CD4-positive, alpha-beta memory T cell (primary cell): ENCODE measurements at regions of chr7 and their contacts with region 1.

Region 1: DNA sequence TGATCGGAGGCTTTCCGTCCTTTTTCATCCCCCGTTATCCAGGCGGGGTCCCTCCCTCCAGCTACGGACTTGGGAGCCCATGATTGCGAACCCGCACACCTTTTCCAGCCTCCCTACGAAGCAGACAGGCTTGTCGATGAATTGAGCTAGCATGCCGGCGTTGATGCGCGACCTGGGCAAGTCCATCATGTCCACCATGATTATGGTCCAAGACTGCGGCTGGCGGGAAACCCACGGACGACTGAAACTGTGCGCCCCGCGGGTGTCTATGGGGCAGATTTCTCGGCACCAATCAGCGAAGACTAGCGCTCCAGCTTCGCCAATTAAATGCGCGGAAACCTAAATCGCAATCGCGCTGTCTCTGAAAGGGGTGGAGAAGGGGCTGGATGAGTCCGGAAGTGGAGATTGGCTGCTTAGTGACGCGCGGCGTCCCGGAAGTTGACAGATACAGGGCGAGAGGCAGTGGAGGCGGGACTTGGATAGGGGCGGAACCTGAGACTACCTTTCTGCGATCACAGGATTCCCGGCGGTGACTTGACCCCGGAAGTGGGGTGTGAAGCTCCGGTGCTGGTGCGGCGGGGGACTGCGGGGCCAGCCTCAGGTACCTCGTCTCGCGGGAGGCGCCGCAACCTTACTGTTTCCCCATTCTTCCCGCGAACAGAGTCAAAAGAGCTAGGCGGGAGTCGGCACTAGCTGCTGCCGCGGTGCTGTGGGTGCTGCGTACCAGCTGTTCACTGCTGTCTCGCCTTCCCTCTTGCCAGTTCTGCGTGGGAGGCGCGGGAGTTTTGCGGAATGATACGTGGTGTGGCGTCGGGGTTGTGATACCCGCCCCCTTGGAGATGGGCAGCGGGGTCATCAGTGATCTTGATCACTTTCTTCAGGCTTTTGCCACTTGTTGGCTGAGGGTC is at the start of gene UMAD1:
- DNase-seq: peak; percentile 97 to 100 (median 100)
- H3K4me3 ChIP-seq: peak within 1 kb of the TSS; percentile 79 to 97
- H3K4me3 Mint-ChIP-seq: peak within 1 kb of the TSS; percentile 91 to 98 (median 96)
- H3K27ac ChIP-seq: peak within 1 kb of the TSS; percentile 91
- H3K27ac Mint-ChIP-seq: peak within 1 kb of the TSS; percentile 95 to 99 (median 99)
- H3K4me1 ChIP-seq: peaks cover 28% of the 10 kb centered on the region
- H3K4me1 Mint-ChIP-seq: peaks cover 25 to 62% (median 42%) of the 10 kb centered on the region in 4 donors
- H3K27me3 ChIP-seq: no peaks in the 10 kb centered on the region
- H3K27me3 Mint-ChIP-seq: no peaks in the 10 kb centered on the region
- total RNA-seq, gene UMAD1: 23.5 to 25.1 TPM

Region 2: DNA sequence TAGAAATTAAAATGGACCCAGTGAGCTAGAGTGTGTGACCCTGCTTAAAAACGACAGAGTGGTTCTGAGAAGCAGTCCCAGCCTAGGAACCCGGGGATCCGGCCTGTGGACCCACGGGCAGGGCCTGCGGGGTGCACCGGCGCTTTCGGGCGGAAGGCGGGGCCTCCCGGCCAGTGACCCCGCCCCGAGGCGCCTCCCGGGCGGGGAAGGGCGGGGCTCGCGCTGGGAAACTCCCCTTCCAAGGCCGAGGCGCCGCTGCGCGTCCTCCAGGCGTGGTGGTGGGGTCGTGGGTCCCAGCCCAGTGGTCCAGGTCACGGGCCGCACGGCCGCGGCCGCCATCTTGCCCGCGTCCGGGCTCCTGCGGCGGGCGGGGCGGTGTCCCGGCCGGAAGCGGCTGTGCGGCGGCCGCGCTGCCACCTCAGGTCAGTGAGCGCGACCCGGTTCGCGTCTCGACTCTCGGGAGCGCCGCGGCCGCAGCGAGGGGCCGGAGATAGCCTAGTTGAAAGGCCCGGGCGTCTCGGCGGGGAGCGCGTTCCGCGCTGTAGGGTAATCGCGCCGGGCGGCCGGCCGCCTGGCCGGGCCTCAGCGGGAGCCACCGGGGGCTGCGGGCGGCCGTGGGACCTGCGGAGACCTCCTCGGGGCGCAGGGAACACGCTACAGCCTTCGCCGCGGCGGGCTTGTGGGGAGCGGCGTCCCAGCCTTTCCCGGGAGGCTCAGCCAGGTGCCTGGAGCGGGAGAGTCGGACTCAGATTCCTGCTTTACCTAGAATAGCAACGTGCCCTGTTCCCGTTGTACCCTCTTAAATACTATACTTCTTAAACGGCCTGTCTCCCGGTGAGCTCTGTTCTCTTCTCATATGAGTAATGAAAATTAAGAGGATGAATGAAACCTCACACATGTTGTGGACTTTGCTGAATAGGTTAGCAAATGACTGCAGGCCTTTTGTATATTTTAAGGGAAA is 73.5 kb before region 1 on chr7 and contains the start of gene MIOS:
- CTCF ChIA-PET with region 1: no interaction called
- POLR2A ChIA-PET with region 1: interaction called, 18 read pairs
- intact Hi-C with region 1: loop called (anchors 1 kb)
- DNase-seq: peak; percentile 79 to 85 (median 84)
- H3K4me3 ChIP-seq: peak within 1 kb of the TSS; percentile 33 to 61
- H3K4me3 Mint-ChIP-seq: peak within 1 kb of the TSS in 7 of 8 donors; percentile 76 to 90 (median 82)
- H3K27ac ChIP-seq: peak within 1 kb of the TSS; percentile 84
- H3K27ac Mint-ChIP-seq: peak within 1 kb of the TSS; percentile 72 to 95 (median 88)
- H3K4me1 ChIP-seq: peaks cover 47% of the 10 kb centered on the region
- H3K4me1 Mint-ChIP-seq: peaks cover 31 to 38% (median 34%) of the 10 kb centered on the region in 4 donors
- H3K27me3 ChIP-seq: no peaks in the 10 kb centered on the region
- H3K27me3 Mint-ChIP-seq: no peaks in the 10 kb centered on the region
- total RNA-seq, gene MIOS: 22.9 to 25.1 TPM

Region 3: DNA sequence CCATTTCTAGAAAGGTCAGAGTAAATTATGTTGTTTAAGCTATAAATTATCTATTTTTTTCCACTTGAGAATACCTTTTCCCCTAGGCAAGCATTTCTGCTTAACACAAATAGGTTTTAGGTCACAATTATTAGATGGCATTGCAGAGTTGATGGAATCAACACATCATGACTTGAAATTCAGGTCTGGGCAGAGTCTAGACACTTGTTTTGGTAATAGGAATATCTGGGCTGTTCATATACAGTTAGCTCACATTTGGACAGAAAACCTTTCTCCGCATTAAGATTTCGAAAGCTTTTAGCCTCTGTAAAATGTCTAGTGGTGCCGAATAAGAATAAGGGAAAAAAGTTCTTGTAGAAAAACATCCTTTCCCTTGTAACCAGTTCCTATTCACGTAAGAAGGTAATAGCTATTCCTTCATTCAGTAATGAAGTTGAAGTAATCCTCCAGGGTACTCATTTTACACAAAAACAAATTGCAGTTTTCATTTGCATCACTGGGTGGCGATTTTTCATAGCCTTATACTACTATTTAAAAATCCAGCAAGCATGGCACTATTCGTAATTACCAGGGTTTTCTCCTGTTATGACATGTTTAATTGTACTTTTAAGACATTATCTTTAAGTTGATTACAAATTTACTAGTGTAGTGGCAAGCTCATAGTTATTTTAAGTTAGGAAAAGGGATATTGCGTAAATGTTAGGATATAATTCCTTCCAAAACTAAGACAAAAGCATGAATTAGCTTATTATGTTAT is 40.9 kb after region 1 on chr7:
- CTCF ChIA-PET with region 1: interaction called, 14 read pairs
- POLR2A ChIA-PET with region 1: interaction called, 5 read pairs
- intact Hi-C with region 1: loop called (anchors 5 kb)
- DNase-seq: peak; percentile 47 to 62 (median 54)
- H3K4me3 ChIP-seq: no peak overlapping the region
- H3K4me3 Mint-ChIP-seq: peak overlapping the region in 3 of 8 donors; percentile 21 to 51 (median 35)
- H3K27ac ChIP-seq: no peak overlapping the region
- H3K27ac Mint-ChIP-seq: peak overlapping the region in 5 of 7 donors; percentile 41 to 59 (median 45)
- H3K4me1 ChIP-seq: peaks cover 15% of the 10 kb centered on the region
- H3K4me1 Mint-ChIP-seq: peaks cover 18 to 35% (median 24%) of the 10 kb centered on the region in 4 donors
- H3K27me3 ChIP-seq: no peaks in the 10 kb centered on the region
- H3K27me3 Mint-ChIP-seq: no peaks in the 10 kb centered on the region

Region 4: DNA sequence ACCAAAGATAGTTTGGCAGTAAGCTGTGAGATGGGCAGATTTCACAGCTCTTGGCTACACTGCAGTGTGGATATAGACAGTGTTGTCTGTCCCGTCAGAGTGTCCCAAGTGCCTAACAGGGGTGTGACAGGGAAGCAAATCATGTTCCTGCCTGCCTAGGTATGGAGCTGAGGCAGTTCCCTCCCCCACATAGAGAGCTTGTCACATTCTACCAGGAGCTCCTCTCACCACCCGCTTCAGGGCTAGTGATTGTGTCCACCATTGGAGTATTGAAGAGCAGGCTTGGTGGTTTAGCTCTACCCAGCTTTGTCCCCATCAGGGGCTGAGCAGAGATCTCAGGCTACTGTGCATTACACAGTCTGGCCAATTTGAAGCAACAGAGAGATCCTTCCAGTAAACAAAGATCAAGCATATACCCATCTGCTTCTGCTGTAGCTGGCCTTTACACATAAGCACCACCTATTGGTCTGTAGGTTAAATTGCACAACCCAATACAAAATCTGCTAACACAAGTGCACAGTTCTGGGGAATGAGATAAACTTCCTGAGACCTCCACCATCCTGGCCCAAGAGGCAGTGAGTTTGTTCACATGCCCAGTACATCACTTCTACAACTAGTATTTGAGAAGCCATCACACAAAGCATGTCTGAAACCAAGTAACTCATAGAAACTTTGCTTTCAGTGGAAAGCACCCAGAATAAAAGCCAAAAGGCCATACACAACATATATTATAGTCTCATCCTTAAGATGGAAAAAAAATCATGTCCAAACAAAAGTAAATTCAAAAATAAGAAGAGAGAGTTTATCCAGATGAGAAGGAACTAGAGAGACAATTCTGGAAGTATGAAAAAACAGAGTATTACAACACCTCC is 395.4 kb after region 1 on chr7:
- CTCF ChIA-PET with region 1: no interaction called
- POLR2A ChIA-PET with region 1: interaction called, 11 read pairs
- intact Hi-C with region 1: no loop called
- DNase-seq: peak in 4 of 5 donors; percentile 32 to 51 (median 41)
- H3K4me3 ChIP-seq: no peak overlapping the region
- H3K4me3 Mint-ChIP-seq: no peak overlapping the region
- H3K27ac ChIP-seq: no peak overlapping the region
- H3K27ac Mint-ChIP-seq: peak overlapping the region; percentile 16 to 86 (median 58)
- H3K4me1 ChIP-seq: peaks cover 20% of the 10 kb centered on the region
- H3K4me1 Mint-ChIP-seq: peaks cover 27 to 41% (median 30%) of the 10 kb centered on the region in 4 donors
- H3K27me3 ChIP-seq: no peaks in the 10 kb centered on the region
- H3K27me3 Mint-ChIP-seq: no peaks in the 10 kb centered on the region

Region 5: DNA sequence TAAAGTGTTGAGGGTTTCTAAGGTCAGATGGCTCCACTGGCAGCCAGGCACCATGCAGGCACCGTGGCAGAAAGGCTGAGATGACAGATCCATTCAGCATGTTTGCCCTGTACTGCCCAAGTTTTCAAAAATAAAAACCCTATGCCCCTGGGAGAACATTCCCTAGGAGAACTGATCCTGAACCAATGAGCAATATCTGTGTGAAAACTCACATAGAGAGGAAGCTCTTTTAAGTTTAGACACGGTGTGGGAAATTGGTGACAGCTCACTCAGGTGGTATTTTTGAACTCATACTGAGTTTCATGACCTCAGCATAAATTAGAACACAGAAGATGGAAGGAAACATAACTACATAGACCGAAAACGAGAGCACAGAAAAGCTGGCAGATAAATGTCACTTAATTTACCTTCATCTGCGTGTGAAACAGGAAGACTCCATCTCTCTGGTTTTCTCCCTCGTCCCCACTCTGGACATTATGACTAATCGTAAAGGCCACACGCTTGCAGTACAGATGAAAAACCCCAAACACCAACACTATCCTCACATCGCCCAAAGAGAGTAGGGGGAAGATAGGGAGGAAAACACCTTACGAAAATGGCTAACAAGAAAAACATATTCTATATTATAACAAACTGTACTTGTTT is 493.7 kb after region 1 on chr7:
- CTCF ChIA-PET with region 1: no interaction called
- POLR2A ChIA-PET with region 1: interaction called, 10 read pairs
- intact Hi-C with region 1: loop called (anchors 5 kb)
- DNase-seq: peak; percentile 38 to 63 (median 48)
- H3K4me3 ChIP-seq: peak overlapping the region in 1 of 2 donors; percentile 15
- H3K4me3 Mint-ChIP-seq: peak overlapping the region; percentile 17 to 85 (median 59)
- H3K27ac ChIP-seq: peak overlapping the region; percentile 57
- H3K27ac Mint-ChIP-seq: peak overlapping the region; percentile 93 to 100 (median 97)
- H3K4me1 ChIP-seq: peaks cover 74% of the 10 kb centered on the region
- H3K4me1 Mint-ChIP-seq: peaks cover 48 to 88% (median 68%) of the 10 kb centered on the region in 4 donors
- H3K27me3 ChIP-seq: no peaks in the 10 kb centered on the region
- H3K27me3 Mint-ChIP-seq: no peaks in the 10 kb centered on the region

Region 6: GRCh38 chr7:8190119-8190895 is 549.8 kb after region 1 on chr7:
- CTCF ChIA-PET with region 1: interaction called, 3 read pairs
- POLR2A ChIA-PET with region 1: no interaction called
- intact Hi-C with region 1: loop called (anchors 1 kb)
- DNase-seq: peak; percentile 67 to 77 (median 68)
- H3K4me3 ChIP-seq: no peak overlapping the region
- H3K4me3 Mint-ChIP-seq: no peak overlapping the region
- H3K27ac ChIP-seq: no peak overlapping the region
- H3K27ac Mint-ChIP-seq: peak overlapping the region in 2 of 7 donors; percentile 8 to 48
- H3K4me1 ChIP-seq: peaks cover 7% of the 10 kb centered on the region
- H3K4me1 Mint-ChIP-seq: peaks cover 13 to 22% (median 18%) of the 10 kb centered on the region in 4 donors
- H3K27me3 ChIP-seq: no peaks in the 10 kb centered on the region
- H3K27me3 Mint-ChIP-seq: no peaks in the 10 kb centered on the region